SK-N-SH (cell line): ENCODE measurements at regions of chr5 and their contacts with region 1.

Region 1: GRCh38 chr5:159987031-159987674 is 21.8 kb upstream of the TTC1 start:
- DNase-seq: peak; percentile 81
- H3K4me3 ChIP-seq: peak overlapping the region; percentile 47 to 64
- H3K27ac ChIP-seq: no peak overlapping the region
- H3K4me1 ChIP-seq: no peaks in the 10 kb centered on the region; a peak in 1 of 4 replicates
- H3K27me3 ChIP-seq: no peaks in the 10 kb centered on the region
- CTCF ChIP-seq: peak; percentile 84
- EP300 ChIP-seq: no peak
- RAD21 ChIP-seq: peak; percentile 75

Region 2: DNA sequence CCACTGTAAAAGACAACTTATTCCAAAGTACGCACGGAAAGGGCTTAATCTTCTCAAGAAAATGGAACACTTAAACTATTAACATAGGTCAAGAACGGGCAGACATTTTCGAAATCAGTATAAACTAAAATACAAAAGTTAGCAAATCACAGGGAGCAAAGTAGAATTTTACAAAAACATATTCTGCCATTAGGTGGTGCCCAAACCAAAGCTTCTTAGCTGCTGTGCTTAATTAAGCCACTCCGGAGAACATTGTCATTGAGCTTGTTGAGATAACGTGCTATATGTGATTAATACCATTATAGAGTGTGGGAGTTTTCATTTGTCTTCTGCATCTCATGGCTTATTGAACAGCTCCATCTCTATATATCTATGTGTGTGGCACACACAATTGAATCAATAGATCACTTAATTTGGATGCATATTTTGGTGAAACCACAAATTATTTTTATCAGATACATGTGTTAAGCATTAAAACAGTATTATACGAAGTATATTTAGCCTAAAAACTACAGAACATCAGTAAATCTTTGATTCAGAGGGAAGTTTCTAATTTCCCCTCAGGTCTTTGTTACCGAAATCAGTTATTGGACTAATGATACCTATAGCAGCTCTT is 700.6 kb before region 1 on chr5:
- CTCF ChIA-PET with region 1: interaction called, 20 read pairs
- POLR2A ChIA-PET with region 1: no interaction called
- DNase-seq: peak; percentile 37
- H3K4me3 ChIP-seq: no peak overlapping the region; a peak in 1 of 4 replicates
- H3K27ac ChIP-seq: no peak overlapping the region
- H3K4me1 ChIP-seq: no peaks in the 10 kb centered on the region; a peak in 1 of 4 replicates
- H3K27me3 ChIP-seq: no peaks in the 10 kb centered on the region
- CTCF ChIP-seq: peak; percentile 64
- EP300 ChIP-seq: no peak
- RAD21 ChIP-seq: peak; percentile 86

Region 3: GRCh38 chr5:159444441-159445082 is 542.6 kb before region 1 on chr5:
- CTCF ChIA-PET with region 1: interaction called, 55 read pairs
- POLR2A ChIA-PET with region 1: no interaction called
- DNase-seq: peak; percentile 44
- H3K4me3 ChIP-seq: no peak overlapping the region; a peak in 1 of 4 replicates
- H3K27ac ChIP-seq: no peak overlapping the region
- H3K4me1 ChIP-seq: no peaks in the 10 kb centered on the region
- H3K27me3 ChIP-seq: no peaks in the 10 kb centered on the region
- CTCF ChIP-seq: peak; percentile 68
- EP300 ChIP-seq: no peak
- RAD21 ChIP-seq: peak; percentile 88

Region 4: GRCh38 chr5:159452480-159453167 is 534.5 kb before region 1 on chr5:
- CTCF ChIA-PET with region 1: interaction called, 11 read pairs
- POLR2A ChIA-PET with region 1: no interaction called
- DNase-seq: no peak
- H3K4me3 ChIP-seq: no peak overlapping the region
- H3K27ac ChIP-seq: no peak overlapping the region
- H3K4me1 ChIP-seq: peaks cover 0 to 9% of the 10 kb centered on the region in 2 experiments
- H3K27me3 ChIP-seq: no peaks in the 10 kb centered on the region
- CTCF ChIP-seq: no peak
- EP300 ChIP-seq: no peak
- RAD21 ChIP-seq: no peak

Region 5: GRCh38 chr5:159936686-159937329 is 50.3 kb before region 1 on chr5:
- CTCF ChIA-PET with region 1: no interaction called
- POLR2A ChIA-PET with region 1: no interaction called
- DNase-seq: no peak
- H3K4me3 ChIP-seq: no peak overlapping the region
- H3K27ac ChIP-seq: no peak overlapping the region
- H3K4me1 ChIP-seq: no peaks in the 10 kb centered on the region
- H3K27me3 ChIP-seq: no peaks in the 10 kb centered on the region
- CTCF ChIP-seq: no peak
- EP300 ChIP-seq: no peak
- RAD21 ChIP-seq: no peak